Activated CD4-positive, alpha-beta T cell treated with anti-CD3 and anti-CD28 coated beads for 36 hours (primary cell): ENCODE measurements at regions of chr6 and their contacts with region 1.

Region 1: GRCh38 chr6:84764332-84765049 is at the start of gene TBX18:
- DNase-seq: peak; percentile 66
- ATAC-seq: peak; percentile 61
- H3K4me3 Mint-ChIP-seq: peak within 1 kb of the TSS; percentile 37
- H3K27ac Mint-ChIP-seq: no peak within 1 kb of the TSS
- H3K4me1 Mint-ChIP-seq: peaks cover 11% of the 10 kb centered on the region
- H3K27me3 Mint-ChIP-seq: peaks cover 57% of the 10 kb centered on the region
- total RNA-seq, gene TBX18: not detected

Region 2: GRCh38 chr6:83708970-83709747 is 1055.3 kb before region 1 on chr6 and contains the start of gene SNAP91:
- CTCF ChIA-PET with region 1: no interaction called
- POLR2A ChIA-PET with region 1: no interaction called
- intact Hi-C with region 1: loop called in 1 of 2 experiments (anchors 10 kb)
- DNase-seq: peak; percentile 32
- ATAC-seq: no peak
- H3K4me3 Mint-ChIP-seq: no peak within 1 kb of the TSS
- H3K27ac Mint-ChIP-seq: no peak within 1 kb of the TSS
- H3K4me1 Mint-ChIP-seq: peaks cover 2% of the 10 kb centered on the region
- H3K27me3 Mint-ChIP-seq: peaks cover 33% of the 10 kb centered on the region
- total RNA-seq, gene SNAP91: not detected

Region 3: DNA sequence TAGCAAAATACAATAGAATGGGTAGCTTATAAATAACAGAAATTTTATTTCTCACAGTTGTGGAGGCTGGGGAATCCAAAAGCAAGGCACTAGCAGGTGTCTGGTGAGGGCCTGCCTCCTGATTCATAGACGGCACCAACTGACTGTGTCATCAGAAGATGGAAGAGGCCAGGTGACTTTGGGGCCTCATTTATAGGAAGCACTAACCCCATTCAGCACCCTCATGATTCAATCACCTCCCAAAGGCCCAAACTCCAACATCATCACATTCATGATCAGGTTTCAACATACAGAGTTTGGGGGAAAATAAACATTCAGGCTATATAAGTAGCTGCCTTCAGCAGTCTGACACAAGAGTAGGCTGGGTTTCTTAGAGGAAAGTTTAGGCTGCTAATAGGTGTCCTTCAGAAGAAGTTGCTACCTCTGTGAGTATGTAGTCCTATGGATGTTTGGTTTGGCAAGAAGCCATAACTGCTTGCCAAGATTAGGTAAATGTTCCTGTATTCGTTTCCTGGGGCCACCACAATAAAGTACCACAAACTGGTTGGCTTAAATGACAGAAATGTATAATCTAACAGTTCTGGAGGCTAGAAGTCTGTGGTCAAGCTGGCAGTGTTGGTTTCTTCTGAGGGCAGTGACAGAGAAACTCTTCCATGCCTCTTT is 734.2 kb after region 1 on chr6:
- CTCF ChIA-PET with region 1: no interaction called
- POLR2A ChIA-PET with region 1: no interaction called
- intact Hi-C with region 1: no loop called
- DNase-seq: no peak
- ATAC-seq: peak; percentile 54
- H3K4me3 Mint-ChIP-seq: no peak overlapping the region
- H3K27ac Mint-ChIP-seq: no peak overlapping the region
- H3K4me1 Mint-ChIP-seq: peaks cover 18% of the 10 kb centered on the region
- H3K27me3 Mint-ChIP-seq: no peaks in the 10 kb centered on the region

Region 4: DNA sequence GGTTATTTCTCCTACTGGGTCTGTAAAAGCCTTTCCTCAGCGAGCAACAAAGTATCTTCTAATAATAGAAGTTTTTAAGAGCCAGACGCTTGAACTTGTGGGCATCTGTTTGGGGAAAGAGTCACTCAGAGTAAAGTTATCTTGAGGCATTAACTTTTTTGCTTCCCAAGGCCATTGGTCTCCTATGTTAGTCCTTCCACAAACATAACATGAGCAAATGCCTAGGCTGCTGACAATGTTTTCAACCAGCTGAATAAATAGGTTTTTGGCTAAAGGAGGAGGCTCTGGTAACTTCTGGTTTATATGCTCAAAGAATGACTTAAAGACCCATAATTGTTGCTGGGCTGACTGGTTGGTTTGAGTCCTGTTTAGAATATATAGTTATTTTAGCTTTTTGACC is 1091.7 kb after region 1 on chr6:
- CTCF ChIA-PET with region 1: no interaction called
- POLR2A ChIA-PET with region 1: no interaction called
- intact Hi-C with region 1: no loop called
- DNase-seq: no peak
- ATAC-seq: no peak
- H3K4me3 Mint-ChIP-seq: no peak overlapping the region
- H3K27ac Mint-ChIP-seq: no peak overlapping the region
- H3K4me1 Mint-ChIP-seq: no peaks in the 10 kb centered on the region
- H3K27me3 Mint-ChIP-seq: peaks cover 8% of the 10 kb centered on the region